GM12878 (cell line): ENCODE measurements at regions of chrX and their contacts with region 1.

Region 1: GRCh38 chrX:109360291-109360690 is 121.6 kb downstream of the GUCY2F start:
- DNase-seq: no peak
- ATAC-seq: no peak
- H3K4me3 ChIP-seq: no peak overlapping the region
- H3K27ac ChIP-seq: no peak overlapping the region
- H3K4me1 ChIP-seq: no peaks in the 10 kb centered on the region
- H3K27me3 ChIP-seq: no peaks in the 10 kb centered on the region
- CTCF ChIP-seq: no peak
- EP300 ChIP-seq: no peak
- POLR2A ChIP-seq: no peak
- RAD21 ChIP-seq: no peak

Region 2: GRCh38 chrX:108671524-108671923 is 688.8 kb before region 1 on chrX:
- CTCF ChIA-PET with region 1: no interaction called
- POLR2A ChIA-PET with region 1: no interaction called
- RAD21 ChIA-PET with region 1: no interaction called
- SMC1A ChIA-PET with region 1: no interaction called
- in situ Hi-C with region 1: no loop called
- intact Hi-C with region 1: no loop called
- DNase-seq: no peak
- ATAC-seq: no peak
- H3K4me3 ChIP-seq: no peak overlapping the region
- H3K27ac ChIP-seq: no peak overlapping the region
- H3K4me1 ChIP-seq: no peaks in the 10 kb centered on the region; the same call in 1 of the 2 replicates
- H3K27me3 ChIP-seq: no peaks in the 10 kb centered on the region
- CTCF ChIP-seq: no peak
- EP300 ChIP-seq: no peak
- POLR2A ChIP-seq: no peak
- RAD21 ChIP-seq: no peak

Region 3: DNA sequence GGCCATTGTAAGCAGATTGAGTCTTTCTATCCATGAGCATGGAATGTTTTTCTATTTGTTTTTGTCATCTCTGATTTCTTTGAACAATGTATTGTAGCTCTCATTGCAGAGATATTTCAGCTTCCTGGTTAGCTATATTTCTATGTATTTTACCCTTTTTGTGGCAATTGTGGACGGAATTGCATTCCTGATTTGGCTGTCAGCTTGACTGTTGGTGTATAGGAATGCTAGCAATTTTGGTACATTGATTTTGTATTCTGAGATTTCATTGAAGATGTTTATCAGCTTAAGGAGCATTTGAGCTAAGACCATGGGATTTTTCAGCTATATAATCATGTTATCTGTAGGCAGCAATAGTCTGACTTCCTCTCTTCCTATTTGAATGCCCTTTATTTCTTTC is 33.0 kb before region 1 on chrX:
- CTCF ChIA-PET with region 1: no interaction called
- POLR2A ChIA-PET with region 1: no interaction called
- RAD21 ChIA-PET with region 1: no interaction called
- SMC1A ChIA-PET with region 1: no interaction called
- in situ Hi-C with region 1: no loop called
- intact Hi-C with region 1: no loop called
- DNase-seq: no peak
- ATAC-seq: no peak
- H3K4me3 ChIP-seq: no peak overlapping the region
- H3K27ac ChIP-seq: no peak overlapping the region
- H3K4me1 ChIP-seq: no peaks in the 10 kb centered on the region
- H3K27me3 ChIP-seq: no peaks in the 10 kb centered on the region
- CTCF ChIP-seq: no peak
- EP300 ChIP-seq: no peak
- POLR2A ChIP-seq: no peak
- RAD21 ChIP-seq: no peak

Region 4: GRCh38 chrX:109345856-109346255 is 14.4 kb before region 1 on chrX:
- CTCF ChIA-PET with region 1: interaction called, 10 read pairs
- POLR2A ChIA-PET with region 1: no interaction called
- RAD21 ChIA-PET with region 1: interaction called, 3 read pairs
- SMC1A ChIA-PET with region 1: interaction called, 3 read pairs
- in situ Hi-C with region 1: no loop called
- intact Hi-C with region 1: no loop called
- DNase-seq: no peak
- ATAC-seq: no peak
- H3K4me3 ChIP-seq: no peak overlapping the region
- H3K27ac ChIP-seq: no peak overlapping the region
- H3K4me1 ChIP-seq: no peaks in the 10 kb centered on the region
- H3K27me3 ChIP-seq: no peaks in the 10 kb centered on the region
- CTCF ChIP-seq: no peak
- EP300 ChIP-seq: no peak
- POLR2A ChIP-seq: no peak
- RAD21 ChIP-seq: no peak

Region 5: GRCh38 chrX:109440475-109440874 is 80.2 kb after region 1 on chrX:
- CTCF ChIA-PET with region 1: no interaction called
- POLR2A ChIA-PET with region 1: no interaction called
- RAD21 ChIA-PET with region 1: no interaction called
- SMC1A ChIA-PET with region 1: no interaction called
- in situ Hi-C with region 1: no loop called
- intact Hi-C with region 1: no loop called
- DNase-seq: no peak
- ATAC-seq: peak; percentile 42; the same call in 2 of the 3 replicates
- H3K4me3 ChIP-seq: no peak overlapping the region
- H3K27ac ChIP-seq: no peak overlapping the region
- H3K4me1 ChIP-seq: no peaks in the 10 kb centered on the region
- H3K27me3 ChIP-seq: no peaks in the 10 kb centered on the region
- CTCF ChIP-seq: no peak
- EP300 ChIP-seq: no peak
- POLR2A ChIP-seq: no peak
- RAD21 ChIP-seq: no peak